Right cardiac atrium (tissue), 5 donors: ENCODE measurements at regions of chr16 and their contacts with region 1.

Region 1: DNA sequence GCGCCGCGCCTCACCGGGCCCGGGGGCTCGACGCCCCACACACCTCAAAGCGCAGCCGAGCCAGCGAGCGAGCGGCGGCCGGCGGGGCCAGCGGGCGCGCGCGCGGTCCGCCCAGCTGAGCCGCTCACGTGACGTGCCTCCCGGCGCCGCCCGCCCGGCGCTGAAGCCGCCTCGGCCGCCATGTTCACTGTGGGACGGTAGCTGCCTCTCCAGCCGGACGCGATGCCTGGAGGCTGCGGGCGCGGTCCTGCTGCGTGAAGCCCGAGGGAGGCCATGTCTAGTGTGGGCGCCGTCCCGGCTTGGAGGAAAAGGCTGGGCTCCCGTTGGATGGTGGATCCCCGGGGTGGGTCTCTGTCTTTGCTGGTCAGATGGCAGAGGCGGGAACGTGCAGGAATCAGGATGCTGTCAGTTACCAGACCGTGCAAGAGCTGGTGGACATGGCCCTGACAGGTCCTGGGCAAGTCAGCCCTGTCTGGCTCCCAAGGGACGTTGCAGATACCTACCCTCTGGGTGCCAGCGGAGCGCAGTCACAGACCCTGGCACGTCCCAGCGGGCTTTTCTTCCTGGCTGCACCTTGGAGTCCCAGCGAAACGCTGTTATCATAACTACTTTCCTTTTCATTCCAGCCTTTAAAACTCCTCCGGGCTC is at the start of gene USP31:
- DNase-seq: peak; percentile 97 to 99 (median 98)
- ATAC-seq: peak; percentile 99
- H3K4me3 ChIP-seq: peak within 1 kb of the TSS; percentile 83
- H3K27ac ChIP-seq: peak within 1 kb of the TSS; percentile 85
- H3K4me1 ChIP-seq: peaks cover 5% of the 10 kb centered on the region
- H3K27me3 ChIP-seq: no peaks in the 10 kb centered on the region
- total RNA-seq, gene USP31: 34.3 to 44.0 (median 37.3) TPM

Region 2: DNA sequence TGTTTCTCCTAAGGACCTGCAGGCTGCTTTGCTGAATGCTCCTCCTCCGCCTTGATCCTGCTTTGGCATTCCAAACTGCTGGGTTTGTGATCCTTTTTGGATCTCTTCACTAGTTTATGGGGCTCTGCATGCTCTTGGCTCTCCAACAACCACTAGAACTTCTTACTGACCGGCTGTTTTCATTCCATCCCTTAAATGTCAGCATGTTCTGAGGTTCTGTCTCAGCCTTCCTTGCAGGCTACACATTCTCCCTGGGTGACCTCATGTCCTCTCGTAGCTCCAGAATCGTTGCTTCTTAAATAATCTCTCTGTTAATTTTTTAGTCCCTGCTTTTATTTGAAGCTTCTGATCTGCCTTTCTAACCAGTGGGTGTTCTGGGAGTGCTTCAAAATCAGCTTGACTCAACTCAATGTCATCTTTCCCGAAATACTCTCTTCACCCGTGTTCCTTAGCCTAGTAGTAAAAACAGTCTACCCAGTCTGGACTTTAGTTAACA is 454.5 kb before region 1 on chr16:
- intact Hi-C with region 1: no loop called
- DNase-seq: peak; percentile 35 to 59 (median 51)
- ATAC-seq: peak; percentile 91 to 95
- H3K4me3 ChIP-seq: no peak overlapping the region
- H3K27ac ChIP-seq: no peak overlapping the region
- H3K4me1 ChIP-seq: peaks cover 2% of the 10 kb centered on the region
- H3K27me3 ChIP-seq: no peaks in the 10 kb centered on the region

Region 3: DNA sequence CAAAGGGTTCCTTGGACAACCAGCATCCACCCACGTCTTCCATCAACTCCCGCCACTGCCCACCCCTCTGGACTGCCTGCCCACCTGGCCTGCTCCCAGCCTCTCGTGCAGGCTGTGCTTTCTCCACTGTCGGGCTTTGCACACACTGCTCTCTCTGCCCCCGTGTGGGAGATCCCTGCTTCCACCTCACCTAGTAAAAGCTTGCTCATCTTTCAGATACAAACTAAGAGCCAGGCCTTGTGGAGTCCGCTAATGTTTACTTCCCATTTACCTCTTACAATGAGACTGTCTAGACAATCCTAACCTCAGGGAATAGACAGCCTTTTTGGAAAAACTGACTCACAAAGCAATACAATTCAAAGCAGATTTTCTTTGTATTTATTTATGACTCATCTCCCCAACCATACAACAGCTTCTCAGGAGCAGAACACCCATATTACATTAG is 67.8 kb before region 1 on chr16:
- intact Hi-C with region 1: loop called in 2 of 4 experiments (anchors 5 kb)
- DNase-seq: no peak
- ATAC-seq: no peak
- H3K4me3 ChIP-seq: no peak overlapping the region
- H3K27ac ChIP-seq: no peak overlapping the region
- H3K4me1 ChIP-seq: no peaks in the 10 kb centered on the region
- H3K27me3 ChIP-seq: no peaks in the 10 kb centered on the region

Region 4: DNA sequence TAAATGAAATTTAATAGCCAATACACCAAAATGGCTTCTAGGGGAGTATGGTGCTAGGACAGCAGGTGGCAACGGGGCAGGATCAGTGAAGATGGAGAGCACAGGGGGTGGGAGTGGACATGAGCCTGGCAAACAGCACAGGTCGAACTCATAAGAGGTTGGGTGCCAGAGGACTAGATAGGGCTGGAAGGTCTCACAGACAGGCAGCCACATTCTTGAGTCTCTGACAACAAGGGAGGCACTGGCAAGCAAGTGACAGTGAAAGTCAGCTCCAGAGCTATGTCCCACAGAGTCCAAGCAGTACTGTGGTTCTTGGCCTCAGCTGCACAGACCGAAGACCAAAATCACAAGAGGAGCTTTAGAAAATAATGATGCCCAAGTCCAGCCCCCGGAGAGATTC is 61.5 kb before region 1 on chr16:
- intact Hi-C with region 1: loop called in 2 of 4 experiments (anchors 5 kb)
- DNase-seq: peak in 1 of 3 donors; percentile 49
- ATAC-seq: peak; percentile 83 to 94
- H3K4me3 ChIP-seq: no peak overlapping the region
- H3K27ac ChIP-seq: peak overlapping the region; percentile 81
- H3K4me1 ChIP-seq: peaks cover 9% of the 10 kb centered on the region
- H3K27me3 ChIP-seq: no peaks in the 10 kb centered on the region